ENCODE measurements at regions of chr19 and their contacts with region 1.

Region 1: GRCh38 chr19:38634757-38635482 is 12.5 kb upstream of the ACTN4 start:
- DNase-seq: peak; percentile 59 to 74 (median 68)
- H3K4me3 ChIP-seq: no peak overlapping the region
- H3K4me3 Mint-ChIP-seq: peak overlapping the region in 5 of 8 donors; percentile 32 to 70 (median 57)
- H3K27ac ChIP-seq: peak overlapping the region; percentile 23
- H3K27ac Mint-ChIP-seq: peak overlapping the region; percentile 82 to 92 (median 90)
- H3K4me1 ChIP-seq: peaks cover 32% of the 10 kb centered on the region
- H3K4me1 Mint-ChIP-seq: peaks cover 10 to 41% (median 27%) of the 10 kb centered on the region in 4 donors
- H3K27me3 ChIP-seq: no peaks in the 10 kb centered on the region
- H3K27me3 Mint-ChIP-seq: no peaks in the 10 kb centered on the region

Region 2: DNA sequence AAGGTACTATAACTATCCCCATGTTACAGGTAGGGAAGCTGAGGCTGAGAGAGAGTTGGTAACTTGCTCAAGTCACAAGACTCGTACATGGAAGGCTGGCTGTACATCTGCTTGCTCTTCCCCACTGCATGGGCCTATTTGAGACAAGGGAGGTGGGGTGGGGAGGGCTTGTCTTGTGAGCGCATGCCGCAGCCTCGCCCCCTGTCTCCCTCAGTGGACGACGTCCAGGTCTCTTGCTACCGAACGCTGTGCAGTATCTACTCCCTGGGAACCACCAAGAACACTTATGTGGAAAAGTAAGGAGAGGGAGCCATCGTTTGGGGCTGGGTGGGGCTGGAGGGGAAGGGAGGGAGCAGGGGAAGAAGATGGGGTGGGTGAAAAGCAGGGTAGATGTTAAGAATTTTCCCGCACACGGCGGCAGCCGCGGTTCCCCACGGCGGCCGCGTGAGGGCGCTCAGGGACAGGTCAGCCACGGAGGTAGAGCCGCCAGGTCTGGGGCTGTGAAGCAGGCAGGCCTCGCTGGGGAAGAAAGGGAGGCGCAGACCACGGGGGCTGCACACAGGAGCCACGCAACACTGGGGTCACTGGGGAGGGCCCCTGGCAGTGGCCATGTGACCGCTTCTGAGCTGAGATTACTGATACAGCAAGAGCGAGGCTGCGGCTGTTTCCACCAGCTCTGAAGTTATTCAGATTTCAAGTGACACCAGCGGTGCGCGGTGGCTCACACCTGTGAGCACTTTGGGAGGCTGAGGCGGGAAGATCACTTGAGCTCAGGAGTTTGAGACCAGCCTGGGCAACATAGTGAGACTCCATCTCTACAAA is 119.9 kb before region 1 on chr19:
- CTCF ChIA-PET with region 1: interaction called, 161 read pairs
- POLR2A ChIA-PET with region 1: interaction called, 21 read pairs
- intact Hi-C with region 1: loop called (anchors 1 kb)
- DNase-seq: peak; percentile 74 to 79 (median 77)
- H3K4me3 ChIP-seq: no peak overlapping the region
- H3K4me3 Mint-ChIP-seq: peak overlapping the region in 3 of 8 donors; percentile 20 to 45 (median 22)
- H3K27ac ChIP-seq: no peak overlapping the region
- H3K27ac Mint-ChIP-seq: peak overlapping the region in 5 of 7 donors; percentile 35 to 57 (median 43)
- H3K4me1 ChIP-seq: peaks cover 19% of the 10 kb centered on the region
- H3K4me1 Mint-ChIP-seq: peaks cover 9 to 22% (median 16%) of the 10 kb centered on the region in 4 donors
- H3K27me3 ChIP-seq: no peaks in the 10 kb centered on the region
- H3K27me3 Mint-ChIP-seq: peaks cover 0 to 2% of the 10 kb centered on the region in 2 donors

Region 3: GRCh38 chr19:38544034-38544958 is 90.6 kb before region 1 on chr19:
- CTCF ChIA-PET with region 1: interaction called, 57 read pairs
- POLR2A ChIA-PET with region 1: interaction called, 23 read pairs
- intact Hi-C with region 1: loop called (anchors 1 kb)
- DNase-seq: peak in 4 of 5 donors; percentile 61 to 71 (median 65)
- H3K4me3 ChIP-seq: no peak overlapping the region
- H3K4me3 Mint-ChIP-seq: peak overlapping the region in 7 of 8 donors; percentile 21 to 76 (median 56)
- H3K27ac ChIP-seq: no peak overlapping the region
- H3K27ac Mint-ChIP-seq: peak overlapping the region in 4 of 7 donors; percentile 27 to 89 (median 72)
- H3K4me1 ChIP-seq: peaks cover 23% of the 10 kb centered on the region
- H3K4me1 Mint-ChIP-seq: peaks cover 15 to 32% (median 21%) of the 10 kb centered on the region in 4 donors
- H3K27me3 ChIP-seq: no peaks in the 10 kb centered on the region
- H3K27me3 Mint-ChIP-seq: no peaks in the 10 kb centered on the region

Region 4: DNA sequence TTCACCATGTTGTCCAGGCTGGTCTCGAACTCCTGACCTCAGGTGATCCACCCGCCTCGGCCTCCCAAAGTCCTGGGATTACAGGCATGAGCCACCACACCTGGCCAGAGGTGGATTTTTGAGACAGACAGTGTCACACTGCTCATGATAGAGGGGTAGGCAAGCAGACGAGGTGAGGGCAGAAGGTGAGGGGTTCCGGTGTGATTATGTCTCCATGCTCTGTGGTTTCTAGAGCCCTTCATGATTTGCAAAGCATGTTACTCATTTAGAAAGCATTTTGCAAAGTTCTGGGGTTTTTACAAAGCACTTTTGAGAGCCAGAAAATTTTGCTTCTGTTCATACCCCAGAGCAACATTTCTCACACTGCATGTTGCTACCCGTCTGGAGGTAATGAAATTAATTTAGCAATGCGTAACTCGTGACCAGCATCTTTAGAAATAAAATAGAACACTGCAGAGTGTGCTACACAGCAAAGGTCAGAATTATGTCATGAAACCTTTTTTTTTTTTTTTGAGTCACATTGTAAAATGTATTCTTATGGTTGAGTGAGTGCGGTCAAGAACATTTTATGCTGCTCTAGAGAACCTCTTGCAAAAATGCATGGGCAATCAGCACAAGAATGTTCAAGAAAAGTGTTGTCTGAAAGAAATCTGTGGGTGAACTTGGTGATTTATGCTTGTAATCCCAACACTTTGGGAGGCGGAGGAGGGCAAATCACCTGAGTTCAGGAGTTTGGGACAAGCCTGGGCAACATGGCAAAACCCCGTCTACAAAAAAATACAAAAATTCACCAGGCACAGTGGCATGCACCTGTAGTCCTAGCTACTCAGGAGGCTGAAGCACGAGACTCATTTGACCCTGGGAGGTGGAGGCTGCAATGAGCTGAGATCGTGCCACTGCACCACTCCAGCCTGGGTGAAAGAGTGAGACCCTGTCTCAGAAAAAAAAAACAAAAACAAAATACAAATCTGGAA is 75.2 kb before region 1 on chr19:
- CTCF ChIA-PET with region 1: interaction called, 18 read pairs
- POLR2A ChIA-PET with region 1: interaction called, 4 read pairs
- intact Hi-C with region 1: loop called (anchors 5 kb)
- DNase-seq: peak; percentile 44 to 76 (median 47)
- H3K4me3 ChIP-seq: peak overlapping the region; percentile 5 to 19
- H3K4me3 Mint-ChIP-seq: peak overlapping the region in 7 of 8 donors; percentile 11 to 82 (median 50)
- H3K27ac ChIP-seq: no peak overlapping the region
- H3K27ac Mint-ChIP-seq: peak overlapping the region in 6 of 7 donors; percentile 45 to 80 (median 65)
- H3K4me1 ChIP-seq: peaks cover 43% of the 10 kb centered on the region
- H3K4me1 Mint-ChIP-seq: peaks cover 23 to 63% (median 48%) of the 10 kb centered on the region in 4 donors
- H3K27me3 ChIP-seq: no peaks in the 10 kb centered on the region
- H3K27me3 Mint-ChIP-seq: peaks cover 0 to 3% of the 10 kb centered on the region in 2 donors

Region 5: GRCh38 chr19:38647368-38647965 is 12.5 kb after region 1 on chr19 and contains the start of gene ACTN4:
- CTCF ChIA-PET with region 1: interaction called, 12 read pairs
- POLR2A ChIA-PET with region 1: interaction called, 21 read pairs
- intact Hi-C with region 1: loop called (anchors 1 kb)
- DNase-seq: peak; percentile 98 to 100 (median 100)
- H3K4me3 ChIP-seq: peak within 1 kb of the TSS; percentile 80 to 81
- H3K4me3 Mint-ChIP-seq: peak within 1 kb of the TSS; percentile 91 to 98 (median 95)
- H3K27ac ChIP-seq: peak within 1 kb of the TSS; percentile 74
- H3K27ac Mint-ChIP-seq: peak within 1 kb of the TSS; percentile 85 to 94 (median 91)
- H3K4me1 ChIP-seq: peaks cover 50% of the 10 kb centered on the region
- H3K4me1 Mint-ChIP-seq: peaks cover 29 to 52% (median 41%) of the 10 kb centered on the region in 4 donors
- H3K27me3 ChIP-seq: no peaks in the 10 kb centered on the region
- H3K27me3 Mint-ChIP-seq: no peaks in the 10 kb centered on the region
- total RNA-seq, gene ACTN4: 151 to 155 TPM

Region 6: GRCh38 chr19:38683393-38684080 is 48.6 kb after region 1 on chr19:
- CTCF ChIA-PET with region 1: interaction called, 17 read pairs
- POLR2A ChIA-PET with region 1: interaction called, 5 read pairs
- intact Hi-C with region 1: loop called (anchors 2 kb)
- DNase-seq: peak in 2 of 5 donors; percentile 35 to 89
- H3K4me3 ChIP-seq: no peak overlapping the region
- H3K4me3 Mint-ChIP-seq: peak overlapping the region in 7 of 8 donors; percentile 35 to 80 (median 53)
- H3K27ac ChIP-seq: peak overlapping the region; percentile 58
- H3K27ac Mint-ChIP-seq: peak overlapping the region; percentile 89 to 97 (median 96)
- H3K4me1 ChIP-seq: peaks cover 98% of the 10 kb centered on the region
- H3K4me1 Mint-ChIP-seq: peaks cover 59 to 94% (median 79%) of the 10 kb centered on the region in 4 donors
- H3K27me3 ChIP-seq: no peaks in the 10 kb centered on the region
- H3K27me3 Mint-ChIP-seq: no peaks in the 10 kb centered on the region

Region 7: DNA sequence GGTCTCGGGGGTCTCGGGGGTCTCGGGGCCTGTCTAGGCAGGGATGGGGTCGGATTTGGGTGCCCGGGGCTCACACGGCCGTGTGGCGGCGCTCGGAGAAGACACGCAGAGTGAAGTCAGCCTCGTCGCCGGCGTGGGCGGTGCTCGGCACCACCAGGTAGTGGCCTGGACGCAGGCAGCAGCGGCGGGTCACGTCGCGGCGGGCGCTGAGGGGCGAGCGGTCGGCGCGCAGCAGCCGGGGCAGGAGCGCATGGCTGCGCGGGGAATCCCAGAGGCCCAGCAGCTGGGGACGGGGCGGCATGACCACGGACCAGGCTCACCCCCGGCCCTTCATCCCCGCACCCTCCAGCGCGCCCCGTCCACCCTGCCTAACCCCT is 101.1 kb after region 1 on chr19:
- CTCF ChIA-PET with region 1: interaction called, 10 read pairs
- POLR2A ChIA-PET with region 1: interaction called, 6 read pairs
- intact Hi-C with region 1: loop called (anchors 1 kb)
- DNase-seq: peak; percentile 57 to 80 (median 59)
- H3K4me3 ChIP-seq: peak overlapping the region in 1 of 2 donors; percentile 14
- H3K4me3 Mint-ChIP-seq: peak overlapping the region; percentile 27 to 77 (median 60)
- H3K27ac ChIP-seq: peak overlapping the region; percentile 30
- H3K27ac Mint-ChIP-seq: peak overlapping the region in 4 of 7 donors; percentile 30 to 88 (median 74)
- H3K4me1 ChIP-seq: peaks cover 57% of the 10 kb centered on the region
- H3K4me1 Mint-ChIP-seq: peaks cover 24 to 69% (median 42%) of the 10 kb centered on the region in 4 donors
- H3K27me3 ChIP-seq: no peaks in the 10 kb centered on the region
- H3K27me3 Mint-ChIP-seq: peaks cover 0 to 2% of the 10 kb centered on the region in 2 donors

Region 8: GRCh38 chr19:40078377-40078776 is 1443.5 kb after region 1 on chr19:
- CTCF ChIA-PET with region 1: no interaction called
- POLR2A ChIA-PET with region 1: no interaction called
- intact Hi-C with region 1: no loop called
- DNase-seq: no peak
- H3K4me3 ChIP-seq: no peak overlapping the region
- H3K4me3 Mint-ChIP-seq: peak overlapping the region in 1 of 8 donors; percentile 29
- H3K27ac ChIP-seq: no peak overlapping the region
- H3K27ac Mint-ChIP-seq: no peak overlapping the region
- H3K4me1 ChIP-seq: no peaks in the 10 kb centered on the region
- H3K4me1 Mint-ChIP-seq: peaks cover 0 to 4% (median 0%) of the 10 kb centered on the region in 4 donors
- H3K27me3 ChIP-seq: no peaks in the 10 kb centered on the region
- H3K27me3 Mint-ChIP-seq: no peaks in the 10 kb centered on the region

Measured in CD4-positive, alpha-beta memory T cell (primary cell).